ENCODE measurements at regions of chr6 and their contacts with region 1.

Region 1: GRCh38 chr6:108558372-108559096 is 2.2 kb upstream of the FOXO3 start:
- DNase-seq: peak; percentile 84 to 99 (median 88)
- ATAC-seq: peak; percentile 74
- H3K4me3 ChIP-seq: peak overlapping the region; percentile 82
- H3K27ac ChIP-seq: peak overlapping the region; percentile 99
- H3K4me1 ChIP-seq: peaks cover 23 to 44% of the 10 kb centered on the region in 2 experiments
- H3K27me3 ChIP-seq: no peaks in the 10 kb centered on the region
- CTCF ChIP-seq: no peak
- EP300 ChIP-seq: peak; percentile 18; the same call in 1 of the 2 replicates
- POLR2A ChIP-seq: no peak
- RAD21 ChIP-seq: no peak

Region 2: DNA sequence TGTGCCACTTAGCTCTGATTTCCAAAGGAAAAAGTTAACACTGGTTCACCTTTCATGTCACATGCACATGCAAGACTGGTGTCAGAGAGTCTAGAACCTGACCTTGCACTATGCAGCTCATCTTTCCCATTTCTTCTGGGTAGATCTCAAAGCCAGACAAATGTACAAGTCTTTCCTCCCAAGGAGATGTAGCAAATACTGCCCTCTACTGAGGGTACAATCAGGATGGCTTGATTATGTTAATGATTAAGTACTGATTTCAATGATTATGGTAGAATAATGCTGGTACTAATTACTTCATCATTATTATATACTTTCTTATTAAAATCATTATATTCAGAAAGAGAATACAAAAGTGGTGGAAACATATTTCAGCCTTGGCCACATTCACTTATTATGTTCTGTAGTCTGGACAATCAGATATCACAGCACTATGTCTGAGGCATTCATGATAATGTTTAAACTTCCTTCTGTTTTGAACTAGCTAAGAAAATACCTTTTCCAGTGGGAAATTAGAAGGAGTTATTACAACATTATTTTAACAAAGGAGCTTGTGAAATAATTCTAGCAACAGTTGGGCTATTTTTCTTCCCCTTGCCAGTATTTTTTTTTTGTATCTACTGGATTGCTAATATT is 66.3 kb before region 1 on chr6:
- CTCF ChIA-PET with region 1: no interaction called
- POLR2A ChIA-PET with region 1: no interaction called
- in situ Hi-C with region 1: no loop called
- intact Hi-C with region 1: no loop called
- DNase-seq: peak in 3 of 4 experiments; percentile 11 to 41 (median 15)
- ATAC-seq: peak; percentile 62; the same call in 2 of the 3 replicates
- H3K4me3 ChIP-seq: no peak overlapping the region
- H3K27ac ChIP-seq: no peak overlapping the region
- H3K4me1 ChIP-seq: no peaks in the 10 kb centered on the region
- H3K27me3 ChIP-seq: no peaks in the 10 kb centered on the region
- CTCF ChIP-seq: peak; percentile 30 to 74 (median 47); a peak in 5 of 6 replicates
- EP300 ChIP-seq: no peak
- POLR2A ChIP-seq: no peak
- RAD21 ChIP-seq: peak; percentile 75 to 87

Region 3: GRCh38 chr6:108541838-108542759 is 16.4 kb before region 1 on chr6:
- CTCF ChIA-PET with region 1: no interaction called
- POLR2A ChIA-PET with region 1: interaction called, 17 read pairs
- in situ Hi-C with region 1: no loop called
- intact Hi-C with region 1: no loop called
- DNase-seq: peak; percentile 64 to 81 (median 64)
- ATAC-seq: peak; percentile 94
- H3K4me3 ChIP-seq: no peak overlapping the region
- H3K27ac ChIP-seq: no peak overlapping the region
- H3K4me1 ChIP-seq: no peaks in the 10 kb centered on the region
- H3K27me3 ChIP-seq: 0 out of 5 replicates have a peak, but pooled peaks cover 0 to 4% of the 10 kb centered on the region in 2 experiments
- CTCF ChIP-seq: peak; percentile 83 to 96 (median 87)
- EP300 ChIP-seq: no peak
- POLR2A ChIP-seq: no peak
- RAD21 ChIP-seq: peak; percentile 98 to 99

Region 4: GRCh38 chr6:108630050-108630714 is 71.6 kb after region 1 on chr6:
- CTCF ChIA-PET with region 1: no interaction called
- POLR2A ChIA-PET with region 1: no interaction called
- in situ Hi-C with region 1: no loop called
- intact Hi-C with region 1: loop called (anchors 5 kb)
- DNase-seq: peak in 2 of 4 experiments; percentile 30 to 50
- ATAC-seq: peak; percentile 80
- H3K4me3 ChIP-seq: no peak overlapping the region
- H3K27ac ChIP-seq: peak overlapping the region; percentile 62; the same call in 2 of the 3 replicates
- H3K4me1 ChIP-seq: peaks cover 6 to 40% of the 10 kb centered on the region in 2 experiments; a peak in 4 of 5 replicates
- H3K27me3 ChIP-seq: no peaks in the 10 kb centered on the region
- CTCF ChIP-seq: no peak
- EP300 ChIP-seq: 0 out of 2 replicates have a peak, but pooled peaks have one; percentile 9
- POLR2A ChIP-seq: no peak
- RAD21 ChIP-seq: no peak

Region 5: GRCh38 chr6:108835218-108835850 is 276.8 kb after region 1 on chr6:
- CTCF ChIA-PET with region 1: no interaction called
- POLR2A ChIA-PET with region 1: no interaction called
- in situ Hi-C with region 1: no loop called
- intact Hi-C with region 1: loop called (anchors 5 kb)
- DNase-seq: peak; percentile 76 to 83 (median 78)
- ATAC-seq: peak; percentile 98
- H3K4me3 ChIP-seq: no peak overlapping the region
- H3K27ac ChIP-seq: no peak overlapping the region
- H3K4me1 ChIP-seq: peaks cover 0 to 9% of the 10 kb centered on the region in 2 experiments; a peak in 4 of 5 replicates
- H3K27me3 ChIP-seq: peaks cover 19 to 40% of the 10 kb centered on the region in 2 experiments; a peak in 4 of 5 replicates
- CTCF ChIP-seq: peak; percentile 82 to 87 (median 86)
- EP300 ChIP-seq: no peak
- POLR2A ChIP-seq: no peak
- RAD21 ChIP-seq: peak; percentile 76 to 87

Region 6: DNA sequence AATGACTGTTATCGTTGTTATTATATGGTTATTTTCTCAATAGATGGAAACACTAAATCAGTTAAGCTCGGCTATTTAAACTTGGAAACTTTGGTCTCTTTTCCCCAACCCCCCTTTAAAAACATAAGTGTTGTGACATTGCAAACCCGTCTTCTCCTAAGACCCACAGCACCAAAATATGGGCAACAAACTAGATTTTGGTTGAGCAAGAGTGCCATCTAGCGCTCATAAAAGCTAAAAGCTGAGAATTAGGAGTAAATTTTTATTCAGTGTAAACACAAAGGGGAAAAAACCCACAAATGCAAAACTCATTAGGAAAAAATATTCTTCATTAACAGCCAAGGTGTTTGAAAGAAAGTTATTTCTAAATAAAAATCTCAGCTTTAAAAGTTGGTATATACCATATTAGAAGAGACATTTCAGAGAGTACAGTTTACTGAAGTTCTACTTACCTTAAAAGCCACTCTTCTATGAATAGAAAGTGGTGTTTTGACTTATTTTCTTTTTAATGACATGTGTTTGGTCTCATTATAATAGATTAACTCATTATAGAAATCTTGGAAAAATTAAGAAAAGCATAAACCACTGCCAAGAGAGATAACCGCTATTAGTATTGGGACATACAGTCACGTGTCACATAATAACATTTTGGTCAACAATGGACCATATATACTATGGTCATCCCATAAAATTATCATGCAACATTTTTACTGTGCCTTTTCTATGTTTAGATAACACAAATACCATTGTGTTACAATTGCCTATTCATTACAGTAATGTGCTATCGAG is 515.0 kb after region 1 on chr6:
- CTCF ChIA-PET with region 1: no interaction called
- POLR2A ChIA-PET with region 1: no interaction called
- in situ Hi-C with region 1: no loop called
- intact Hi-C with region 1: loop called (anchors 5 kb)
- DNase-seq: peak; percentile 27 to 77 (median 42)
- ATAC-seq: peak; percentile 76
- H3K4me3 ChIP-seq: no peak overlapping the region
- H3K27ac ChIP-seq: no peak overlapping the region
- H3K4me1 ChIP-seq: no peaks in the 10 kb centered on the region; a peak in 1 of 5 replicates
- H3K27me3 ChIP-seq: no peaks in the 10 kb centered on the region
- CTCF ChIP-seq: peak; percentile 64 to 81 (median 68); a peak in 5 of 6 replicates
- EP300 ChIP-seq: no peak
- POLR2A ChIP-seq: no peak
- RAD21 ChIP-seq: peak; percentile 87 to 92